Natural killer cell (primary cell): ENCODE measurements at regions of chr12 and their contacts with region 1.

Region 1: DNA sequence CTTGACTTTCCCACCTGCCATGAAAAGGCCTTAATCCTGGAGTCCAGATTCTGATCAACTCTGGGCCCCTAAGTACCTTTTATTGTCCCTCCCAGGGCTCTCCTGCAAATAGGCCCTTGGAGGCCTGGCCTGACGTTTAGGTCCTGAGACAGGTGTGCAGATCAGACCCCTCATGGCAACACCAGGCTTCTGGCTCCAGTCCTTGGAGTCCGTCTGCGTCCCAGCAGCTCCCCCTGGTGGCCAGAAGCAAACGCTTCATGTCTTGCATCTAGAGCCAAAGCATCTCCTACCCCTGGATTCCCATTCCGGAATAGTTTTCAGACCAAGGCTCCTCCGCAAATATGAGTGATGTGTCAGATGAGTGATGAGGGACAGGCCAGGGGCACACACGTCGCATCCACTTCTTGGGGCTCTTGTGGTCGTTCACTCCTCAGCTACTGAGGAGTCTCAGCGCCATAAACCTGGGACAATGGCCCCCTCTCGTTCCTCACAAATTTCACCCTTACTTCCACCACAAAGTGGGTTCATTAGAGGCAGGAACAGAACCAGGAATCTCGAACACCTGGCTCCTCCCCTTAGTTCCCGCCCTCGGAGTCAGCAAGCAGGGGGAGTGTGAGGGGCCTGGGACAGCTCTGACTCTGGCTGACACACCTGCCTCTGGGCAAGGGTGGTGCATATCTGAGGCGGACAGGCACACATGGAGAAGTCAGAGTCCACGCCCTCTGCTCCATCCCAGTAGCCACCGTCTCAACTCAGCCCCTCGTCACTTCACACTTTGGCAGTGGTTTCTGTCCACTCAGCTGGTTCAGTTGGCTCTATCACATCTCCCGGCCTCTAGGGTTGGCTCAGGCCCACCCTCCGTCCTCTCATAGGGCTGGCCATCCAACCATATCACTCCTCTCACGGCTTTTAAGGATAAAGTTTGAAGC is 77.9 kb upstream of the PWP1 start:
- DNase-seq: peak; percentile 77 to 90
- ATAC-seq: peak; percentile 73 to 86 (median 79)
- H3K4me3 ChIP-seq: no peak overlapping the region
- H3K4me3 Mint-ChIP-seq: no peak overlapping the region
- H3K27ac ChIP-seq: no peak overlapping the region
- H3K27ac Mint-ChIP-seq: no peak overlapping the region
- H3K4me1 ChIP-seq: no peaks in the 10 kb centered on the region
- H3K4me1 Mint-ChIP-seq: no peaks in the 10 kb centered on the region
- H3K27me3 ChIP-seq: no peaks in the 10 kb centered on the region
- H3K27me3 Mint-ChIP-seq: no peaks in the 10 kb centered on the region
- CTCF ChIP-seq: peak; percentile 88

Region 2: GRCh38 chr12:106386813-106387535 is 1220.8 kb before region 1 on chr12:
- intact Hi-C with region 1: loop called (anchors 5 kb)
- DNase-seq: no peak
- ATAC-seq: no peak
- H3K4me3 ChIP-seq: no peak overlapping the region
- H3K4me3 Mint-ChIP-seq: no peak overlapping the region
- H3K27ac ChIP-seq: no peak overlapping the region
- H3K27ac Mint-ChIP-seq: no peak overlapping the region
- H3K4me1 ChIP-seq: no peaks in the 10 kb centered on the region
- H3K4me1 Mint-ChIP-seq: no peaks in the 10 kb centered on the region
- H3K27me3 ChIP-seq: no peaks in the 10 kb centered on the region
- H3K27me3 Mint-ChIP-seq: no peaks in the 10 kb centered on the region
- CTCF ChIP-seq: no peak

Region 3: GRCh38 chr12:107126796-107127481 is 480.8 kb before region 1 on chr12:
- intact Hi-C with region 1: loop called (anchors 1 kb)
- DNase-seq: peak in 1 of 2 donors; percentile 33
- ATAC-seq: peak in 1 of 3 donors; percentile 34
- H3K4me3 ChIP-seq: no peak overlapping the region
- H3K4me3 Mint-ChIP-seq: no peak overlapping the region
- H3K27ac ChIP-seq: no peak overlapping the region
- H3K27ac Mint-ChIP-seq: no peak overlapping the region
- H3K4me1 ChIP-seq: no peaks in the 10 kb centered on the region
- H3K4me1 Mint-ChIP-seq: no peaks in the 10 kb centered on the region
- H3K27me3 ChIP-seq: no peaks in the 10 kb centered on the region
- H3K27me3 Mint-ChIP-seq: peaks cover 21 to 29% of the 10 kb centered on the region in 2 donors
- CTCF ChIP-seq: no peak

Region 4: DNA sequence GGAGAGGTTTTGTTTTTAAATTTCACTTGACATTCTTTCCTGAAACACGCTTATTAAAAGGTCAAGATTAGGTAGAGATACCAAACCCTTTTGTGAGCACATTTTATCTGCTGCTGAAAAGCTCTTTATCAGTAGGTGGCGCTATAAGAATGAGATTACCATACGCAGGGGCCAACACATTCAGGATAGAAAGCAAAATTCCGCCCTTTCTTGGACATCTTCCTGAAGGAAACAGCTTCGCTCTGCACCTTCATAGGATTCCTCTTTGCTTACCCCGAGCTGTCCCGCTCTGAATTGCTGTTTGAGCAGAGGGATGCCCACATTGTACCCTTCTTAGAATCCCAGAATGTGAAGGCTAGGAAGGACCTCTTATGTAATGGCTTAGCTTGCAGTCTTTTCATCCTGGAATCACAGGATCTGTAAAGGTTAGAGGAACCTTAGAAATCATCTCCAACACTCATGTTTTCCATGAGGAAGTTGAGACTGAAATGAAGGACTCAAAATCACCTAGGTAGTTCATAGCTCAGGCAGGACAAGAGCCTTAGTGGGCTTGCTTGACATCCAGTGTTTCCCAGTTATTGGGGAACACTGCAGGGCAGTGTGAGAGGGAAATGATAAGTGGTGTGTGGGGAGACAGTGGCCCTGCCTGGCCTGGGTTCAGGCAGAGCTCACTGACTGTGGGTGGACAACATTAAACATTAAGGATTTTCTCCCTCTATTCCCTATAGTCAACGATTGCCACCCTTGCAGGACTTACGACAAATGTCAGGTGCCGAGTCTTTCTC is 475.7 kb before region 1 on chr12:
- intact Hi-C with region 1: loop called (anchors 1 kb)
- DNase-seq: peak in 1 of 2 donors; percentile 73
- ATAC-seq: peak in 2 of 3 donors; percentile 46 to 64
- H3K4me3 ChIP-seq: no peak overlapping the region
- H3K4me3 Mint-ChIP-seq: no peak overlapping the region
- H3K27ac ChIP-seq: no peak overlapping the region
- H3K27ac Mint-ChIP-seq: peak overlapping the region in 1 of 2 donors; percentile 11
- H3K4me1 ChIP-seq: peaks cover 6% of the 10 kb centered on the region
- H3K4me1 Mint-ChIP-seq: peaks cover 4 to 7% of the 10 kb centered on the region in 2 donors
- H3K27me3 ChIP-seq: no peaks in the 10 kb centered on the region
- H3K27me3 Mint-ChIP-seq: peaks cover 2 to 7% of the 10 kb centered on the region in 2 donors
- CTCF ChIP-seq: peak; percentile 86

Region 5: DNA sequence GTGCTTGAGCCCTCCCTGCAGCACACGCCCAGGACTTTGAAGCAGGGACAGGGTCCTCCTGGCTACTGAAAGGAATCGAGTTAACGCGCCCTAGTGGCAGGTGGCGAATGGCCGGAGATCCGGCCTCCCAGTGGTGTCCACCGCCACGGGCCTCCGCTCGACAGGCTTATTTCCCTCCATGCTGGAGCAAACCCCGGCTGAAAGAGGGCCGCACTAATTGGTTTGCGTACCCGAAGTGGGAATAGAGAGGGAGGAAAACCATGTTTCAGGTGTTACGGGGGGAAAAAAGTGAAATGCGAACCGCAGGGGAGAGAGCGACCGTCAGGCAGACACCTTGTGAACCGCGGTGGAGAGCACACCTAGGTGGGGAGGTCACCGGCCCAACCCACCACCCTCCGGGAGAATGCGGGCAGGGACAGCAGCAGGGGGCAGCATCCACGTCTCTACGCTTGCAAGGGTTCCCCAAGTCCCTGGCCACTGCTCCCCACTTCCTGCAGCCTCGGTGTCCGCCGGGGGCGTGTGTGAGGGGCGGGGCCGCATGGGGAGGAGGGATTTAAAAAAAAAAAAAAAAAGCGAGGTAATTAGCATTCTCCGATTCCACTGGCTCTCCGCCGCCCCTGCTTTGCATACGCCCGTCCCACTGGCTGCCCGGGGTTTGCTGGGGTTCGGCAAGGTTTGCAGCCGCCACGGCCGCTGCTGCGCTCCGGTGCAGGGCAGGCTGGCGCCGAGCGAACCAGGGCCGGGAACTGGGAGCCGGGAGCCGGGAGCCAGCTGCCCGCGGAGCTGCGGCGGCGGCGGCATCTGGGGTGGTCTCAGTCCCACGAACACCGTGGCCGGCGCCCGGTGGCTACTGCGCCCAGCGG is 289.7 kb before region 1 on chr12:
- intact Hi-C with region 1: loop called (anchors 10 kb)
- DNase-seq: peak; percentile 77 to 92
- ATAC-seq: peak; percentile 81 to 93 (median 81)
- H3K4me3 ChIP-seq: peak overlapping the region; percentile 35
- H3K4me3 Mint-ChIP-seq: peak overlapping the region; percentile 89
- H3K27ac ChIP-seq: no peak overlapping the region
- H3K27ac Mint-ChIP-seq: peak overlapping the region; percentile 76 to 81
- H3K4me1 ChIP-seq: peaks cover 43% of the 10 kb centered on the region
- H3K4me1 Mint-ChIP-seq: peaks cover 36 to 42% of the 10 kb centered on the region in 2 donors
- H3K27me3 ChIP-seq: peaks cover 6% of the 10 kb centered on the region
- H3K27me3 Mint-ChIP-seq: peaks cover 0 to 10% of the 10 kb centered on the region in 2 donors
- CTCF ChIP-seq: peak; percentile 19

Region 6: DNA sequence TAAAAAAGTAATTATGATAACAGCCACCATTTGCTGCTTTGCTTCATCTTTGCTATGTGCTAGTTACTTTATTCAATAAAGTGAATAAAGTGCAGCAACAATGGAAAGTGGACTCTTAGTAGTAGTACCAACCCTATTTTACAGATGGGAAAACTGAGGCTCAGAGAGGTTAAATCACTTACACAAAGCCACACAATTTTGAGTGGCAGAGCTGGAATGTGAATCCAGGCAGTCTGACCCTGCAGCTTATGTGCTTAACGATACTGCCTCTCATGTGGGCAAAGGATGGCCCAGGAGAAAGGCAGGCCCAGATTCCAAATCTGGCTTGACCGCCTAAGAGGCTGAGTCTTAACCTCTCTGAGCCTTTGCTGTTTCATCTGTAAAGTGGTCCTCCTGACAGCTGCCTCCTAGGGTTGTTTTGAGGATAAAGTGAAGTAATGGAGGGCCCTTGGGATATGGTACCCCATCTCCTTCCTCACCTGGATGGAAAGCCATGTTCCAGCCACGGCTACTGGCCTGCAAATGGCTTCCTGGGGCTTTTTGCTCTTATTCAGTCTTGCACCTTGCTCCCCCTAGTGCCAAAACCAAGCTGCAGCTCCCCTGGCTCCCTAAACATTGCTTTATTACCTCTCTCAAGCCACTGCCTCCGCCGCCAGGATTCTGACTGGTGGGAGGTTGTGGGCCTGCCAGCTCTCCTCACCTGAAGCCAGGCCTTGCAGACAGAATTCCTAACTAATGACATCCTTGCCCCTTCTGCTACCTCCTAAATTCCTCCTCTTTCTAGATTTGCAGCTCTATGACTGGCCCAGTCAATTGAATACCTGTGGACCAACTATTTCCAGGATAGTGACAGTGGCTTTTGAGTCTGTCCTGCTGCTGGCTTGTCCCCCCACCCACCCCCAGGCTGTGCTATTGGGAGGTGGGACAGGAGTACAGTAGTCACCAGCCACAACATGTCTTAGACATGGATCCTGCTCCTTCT is 205.4 kb before region 1 on chr12:
- intact Hi-C with region 1: loop called (anchors 1 kb)
- DNase-seq: peak; percentile 40 to 78
- ATAC-seq: peak; percentile 61 to 86 (median 82)
- H3K4me3 ChIP-seq: no peak overlapping the region
- H3K4me3 Mint-ChIP-seq: no peak overlapping the region
- H3K27ac ChIP-seq: no peak overlapping the region
- H3K27ac Mint-ChIP-seq: no peak overlapping the region
- H3K4me1 ChIP-seq: peaks cover 4% of the 10 kb centered on the region
- H3K4me1 Mint-ChIP-seq: peaks cover 7 to 14% of the 10 kb centered on the region in 2 donors
- H3K27me3 ChIP-seq: no peaks in the 10 kb centered on the region
- H3K27me3 Mint-ChIP-seq: no peaks in the 10 kb centered on the region
- CTCF ChIP-seq: peak; percentile 73